GM12878 (cell line): ENCODE measurements at regions of chr1 and their contacts with region 1.

Region 1: GRCh38 chr1:66242646-66243547 is 291.1 kb upstream of the SGIP1 start:
- DNase-seq: no peak
- ATAC-seq: peak; percentile 86
- H3K4me3 ChIP-seq: no peak overlapping the region
- H3K27ac ChIP-seq: no peak overlapping the region
- H3K4me1 ChIP-seq: peaks cover 7% of the 10 kb centered on the region
- H3K27me3 ChIP-seq: 0 out of 4 replicates have a peak, but pooled peaks cover 0 to 1% of the 10 kb centered on the region in 2 experiments
- CTCF ChIP-seq: peak; percentile 99 to 100 (median 99); a peak in 5 of 6 replicates
- EP300 ChIP-seq: no peak
- POLR2A ChIP-seq: no peak
- RAD21 ChIP-seq: peak; percentile 97

Region 2: GRCh38 chr1:65419681-65420589 is 823.0 kb before region 1 on chr1:
- CTCF ChIA-PET with region 1: no interaction called
- POLR2A ChIA-PET with region 1: no interaction called
- RAD21 ChIA-PET with region 1: no interaction called
- SMC1A ChIA-PET with region 1: no interaction called
- in situ Hi-C with region 1: loop called (anchors 10 kb)
- intact Hi-C with region 1: no loop called
- DNase-seq: peak; percentile 87
- ATAC-seq: peak; percentile 95
- H3K4me3 ChIP-seq: peak overlapping the region; percentile 96
- H3K27ac ChIP-seq: peak overlapping the region; percentile 84
- H3K4me1 ChIP-seq: peaks cover 6% of the 10 kb centered on the region
- H3K27me3 ChIP-seq: no peaks in the 10 kb centered on the region
- CTCF ChIP-seq: no peak
- EP300 ChIP-seq: no peak; a peak in 1 of 4 replicates
- POLR2A ChIP-seq: peak; percentile 71
- RAD21 ChIP-seq: no peak

Region 3: DNA sequence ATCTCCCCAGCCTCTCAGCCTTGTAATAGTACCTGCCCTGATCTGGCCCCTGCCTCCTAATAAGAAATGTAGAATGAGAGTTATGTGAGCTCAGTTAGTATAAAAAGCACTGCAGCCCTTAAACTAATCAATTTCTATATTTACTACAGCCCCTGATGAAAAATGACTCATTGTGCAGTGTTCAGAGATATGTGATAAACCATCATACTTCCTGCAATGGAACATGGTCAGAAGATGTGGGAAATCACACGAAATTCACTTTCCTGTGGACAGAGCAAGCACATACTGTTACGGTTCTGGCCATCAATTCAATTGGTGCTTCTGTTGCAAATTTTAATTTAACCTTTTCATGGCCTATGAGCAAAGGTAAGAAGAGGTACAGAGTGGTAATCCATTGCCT is 627.0 kb before region 1 on chr1:
- CTCF ChIA-PET with region 1: no interaction called
- POLR2A ChIA-PET with region 1: no interaction called
- RAD21 ChIA-PET with region 1: no interaction called
- SMC1A ChIA-PET with region 1: no interaction called
- in situ Hi-C with region 1: no loop called
- intact Hi-C with region 1: no loop called
- DNase-seq: no peak
- ATAC-seq: no peak
- H3K4me3 ChIP-seq: no peak overlapping the region
- H3K27ac ChIP-seq: no peak overlapping the region
- H3K4me1 ChIP-seq: no peaks in the 10 kb centered on the region
- H3K27me3 ChIP-seq: no peaks in the 10 kb centered on the region
- CTCF ChIP-seq: no peak
- EP300 ChIP-seq: no peak
- POLR2A ChIP-seq: no peak
- RAD21 ChIP-seq: no peak

Region 4: GRCh38 chr1:65658122-65658521 is 584.8 kb before region 1 on chr1:
- CTCF ChIA-PET with region 1: no interaction called
- POLR2A ChIA-PET with region 1: no interaction called
- RAD21 ChIA-PET with region 1: no interaction called
- SMC1A ChIA-PET with region 1: no interaction called
- in situ Hi-C with region 1: no loop called
- intact Hi-C with region 1: no loop called
- DNase-seq: no peak
- ATAC-seq: no peak
- H3K4me3 ChIP-seq: no peak overlapping the region
- H3K27ac ChIP-seq: no peak overlapping the region
- H3K4me1 ChIP-seq: no peaks in the 10 kb centered on the region
- H3K27me3 ChIP-seq: no peaks in the 10 kb centered on the region
- CTCF ChIP-seq: no peak
- EP300 ChIP-seq: no peak
- POLR2A ChIP-seq: no peak
- RAD21 ChIP-seq: no peak

Region 5: GRCh38 chr1:65958561-65959350 is 284.1 kb before region 1 on chr1:
- CTCF ChIA-PET with region 1: interaction called, 123 read pairs
- POLR2A ChIA-PET with region 1: no interaction called
- RAD21 ChIA-PET with region 1: interaction called, 30 read pairs
- SMC1A ChIA-PET with region 1: interaction called, 66 read pairs
- in situ Hi-C with region 1: loop called (anchors 5 kb)
- intact Hi-C with region 1: loop called (anchors 1 kb)
- DNase-seq: peak; percentile 7
- ATAC-seq: peak; percentile 78
- H3K4me3 ChIP-seq: no peak overlapping the region
- H3K27ac ChIP-seq: no peak overlapping the region
- H3K4me1 ChIP-seq: no peaks in the 10 kb centered on the region
- H3K27me3 ChIP-seq: peaks cover 0 to 2% of the 10 kb centered on the region in 2 experiments; a peak in 1 of 4 replicates
- CTCF ChIP-seq: peak; percentile 42 to 73 (median 46); a peak in 5 of 6 replicates
- EP300 ChIP-seq: no peak
- POLR2A ChIP-seq: no peak
- RAD21 ChIP-seq: peak; percentile 95

Region 6: DNA sequence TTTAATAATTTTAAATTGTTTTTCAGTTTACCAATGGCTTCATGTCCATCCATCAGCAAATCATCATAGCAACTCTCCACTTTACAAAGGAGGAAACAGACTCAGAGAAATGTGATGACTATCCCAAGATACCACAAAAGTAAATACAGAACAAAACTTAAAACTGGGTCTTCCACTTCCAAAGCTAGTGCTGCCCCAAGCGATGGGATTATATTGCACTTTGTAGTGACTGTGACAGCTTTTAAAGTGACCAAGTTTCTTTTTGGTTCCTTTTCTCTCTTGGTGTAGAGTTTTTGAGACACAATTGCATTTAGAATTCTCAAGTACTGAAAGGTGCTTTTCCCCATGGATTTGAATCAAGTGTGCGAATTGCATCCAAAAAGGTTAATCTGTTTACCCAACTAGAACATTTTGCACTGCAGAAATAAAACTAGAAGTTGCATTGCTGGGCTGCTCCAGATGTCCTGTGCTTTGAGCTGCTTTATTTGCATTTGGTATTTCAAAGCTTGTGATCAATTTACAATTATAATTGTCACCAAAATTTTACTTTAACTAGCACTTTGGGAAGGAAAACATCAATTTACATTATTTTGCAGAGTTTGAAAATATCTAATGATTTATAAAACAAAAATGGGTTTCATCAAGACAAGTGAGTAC is 130.0 kb before region 1 on chr1:
- CTCF ChIA-PET with region 1: no interaction called
- POLR2A ChIA-PET with region 1: no interaction called
- RAD21 ChIA-PET with region 1: no interaction called
- SMC1A ChIA-PET with region 1: no interaction called
- in situ Hi-C with region 1: no loop called
- intact Hi-C with region 1: no loop called
- DNase-seq: no peak
- ATAC-seq: no peak
- H3K4me3 ChIP-seq: no peak overlapping the region
- H3K27ac ChIP-seq: no peak overlapping the region
- H3K4me1 ChIP-seq: no peaks in the 10 kb centered on the region
- H3K27me3 ChIP-seq: no peaks in the 10 kb centered on the region
- CTCF ChIP-seq: no peak
- EP300 ChIP-seq: no peak
- POLR2A ChIP-seq: no peak
- RAD21 ChIP-seq: no peak

Region 7: GRCh38 chr1:66160719-66161118 is 82.2 kb before region 1 on chr1:
- CTCF ChIA-PET with region 1: no interaction called
- POLR2A ChIA-PET with region 1: no interaction called
- RAD21 ChIA-PET with region 1: no interaction called
- SMC1A ChIA-PET with region 1: no interaction called
- in situ Hi-C with region 1: no loop called
- intact Hi-C with region 1: no loop called
- DNase-seq: no peak
- ATAC-seq: no peak
- H3K4me3 ChIP-seq: no peak overlapping the region
- H3K27ac ChIP-seq: no peak overlapping the region
- H3K4me1 ChIP-seq: no peaks in the 10 kb centered on the region
- H3K27me3 ChIP-seq: no peaks in the 10 kb centered on the region
- CTCF ChIP-seq: no peak
- EP300 ChIP-seq: no peak
- POLR2A ChIP-seq: no peak
- RAD21 ChIP-seq: no peak

Region 8: GRCh38 chr1:66231217-66231616 is 11.7 kb before region 1 on chr1:
- CTCF ChIA-PET with region 1: interaction called, 23 read pairs
- POLR2A ChIA-PET with region 1: no interaction called
- RAD21 ChIA-PET with region 1: no interaction called
- SMC1A ChIA-PET with region 1: interaction called, 5 read pairs
- in situ Hi-C with region 1: no loop called
- intact Hi-C with region 1: no loop called
- DNase-seq: no peak
- ATAC-seq: no peak
- H3K4me3 ChIP-seq: no peak overlapping the region
- H3K27ac ChIP-seq: no peak overlapping the region
- H3K4me1 ChIP-seq: no peaks in the 10 kb centered on the region
- H3K27me3 ChIP-seq: peaks cover 0 to under 1% of the 10 kb centered on the region in 2 experiments; a peak in 2 of 4 replicates
- CTCF ChIP-seq: no peak
- EP300 ChIP-seq: no peak
- POLR2A ChIP-seq: no peak
- RAD21 ChIP-seq: no peak

Region 9: DNA sequence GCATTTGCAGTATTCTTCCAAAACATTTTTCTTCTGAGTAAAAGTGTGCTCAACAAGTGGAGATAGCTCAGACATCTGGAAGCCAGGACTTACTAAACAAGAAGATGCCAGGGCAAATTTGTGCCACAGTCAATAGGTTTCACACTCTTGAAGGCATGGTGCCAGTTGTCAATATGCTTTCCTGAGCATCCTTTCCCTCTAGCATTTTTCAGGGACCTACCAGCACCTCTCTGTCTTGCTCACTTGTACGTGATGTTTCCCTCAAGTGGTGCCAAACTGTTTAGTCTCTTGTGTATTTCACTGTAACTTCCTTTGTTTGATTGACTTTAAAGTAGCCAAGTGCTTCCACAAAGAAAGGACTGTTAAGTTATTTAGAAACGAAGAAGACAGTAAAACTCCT is 97.0 kb after region 1 on chr1:
- CTCF ChIA-PET with region 1: interaction called, 86 read pairs
- POLR2A ChIA-PET with region 1: no interaction called
- RAD21 ChIA-PET with region 1: interaction called, 131 read pairs
- SMC1A ChIA-PET with region 1: interaction called, 153 read pairs
- in situ Hi-C with region 1: no loop called
- intact Hi-C with region 1: no loop called
- DNase-seq: no peak
- ATAC-seq: peak; percentile 8
- H3K4me3 ChIP-seq: peak overlapping the region; percentile 42
- H3K27ac ChIP-seq: peak overlapping the region; percentile 83
- H3K4me1 ChIP-seq: peaks cover 21% of the 10 kb centered on the region
- H3K27me3 ChIP-seq: no peaks in the 10 kb centered on the region
- CTCF ChIP-seq: no peak
- EP300 ChIP-seq: no peak
- POLR2A ChIP-seq: no peak
- RAD21 ChIP-seq: no peak

Region 10: GRCh38 chr1:66503841-66504470 is 261.1 kb after region 1 on chr1:
- CTCF ChIA-PET with region 1: interaction called, 27 read pairs
- POLR2A ChIA-PET with region 1: no interaction called
- RAD21 ChIA-PET with region 1: interaction called, 12 read pairs
- SMC1A ChIA-PET with region 1: interaction called, 5 read pairs
- in situ Hi-C with region 1: no loop called
- intact Hi-C with region 1: loop called (anchors 2 kb)
- DNase-seq: no peak
- ATAC-seq: peak; percentile 89
- H3K4me3 ChIP-seq: no peak overlapping the region
- H3K27ac ChIP-seq: no peak overlapping the region
- H3K4me1 ChIP-seq: no peaks in the 10 kb centered on the region
- H3K27me3 ChIP-seq: 0 out of 4 replicates have a peak, but pooled peaks cover 0 to 1% of the 10 kb centered on the region in 2 experiments
- CTCF ChIP-seq: peak; percentile 57 to 69 (median 63)
- EP300 ChIP-seq: no peak
- POLR2A ChIP-seq: no peak
- RAD21 ChIP-seq: peak; percentile 56